ENCODE measurements at regions of chr16 and their contacts with region 1.

Region 1: GRCh38 chr16:1054660-1055556 is 17.6 kb upstream of the SSTR5 start:
- ATAC-seq: peak; percentile 76 to 91 (median 88)
- H3K4me3 ChIP-seq: no peak overlapping the region
- H3K27ac ChIP-seq: no peak overlapping the region
- H3K4me1 ChIP-seq: peaks cover 5 to 25% of the 10 kb centered on the region in 2 donors

Region 2: GRCh38 chr16:53346-54236 is 1001.3 kb before region 1 on chr16 and contains the starts of genes POLR3K and SNRNP25:
- in situ Hi-C with region 1: no loop called
- ATAC-seq: peak; percentile 91 to 98 (median 97)
- H3K4me3 ChIP-seq: peak within 1 kb of the TSS; percentile 54 to 94 (median 80)
- H3K27ac ChIP-seq: peak within 1 kb of the TSS; percentile 8 to 21
- H3K4me1 ChIP-seq: peaks cover 4 to 5% of the 10 kb centered on the region in 2 donors
- total RNA-seq, gene POLR3K: 3.5 to 23.1 (median 10.3) TPM
- total RNA-seq, gene SNRNP25: 14.1 to 50.6 (median 33.1) TPM

Region 3: GRCh38 chr16:720990-721764 is 333.7 kb before region 1 on chr16 and contains the start of gene ANTKMT:
- in situ Hi-C with region 1: loop called in 1 of 9 experiments (anchors 25 kb)
- ATAC-seq: peak; percentile 74 to 89 (median 80)
- H3K4me3 ChIP-seq: peak within 1 kb of the TSS; percentile 59 to 99 (median 77)
- H3K27ac ChIP-seq: peak within 1 kb of the TSS; percentile 94 to 97
- H3K4me1 ChIP-seq: peaks cover 41 to 46% of the 10 kb centered on the region in 2 donors
- total RNA-seq, gene ANTKMT: 21.6 to 30.5 (median 24.5) TPM

Region 4: GRCh38 chr16:807347-808084 is 247.4 kb before region 1 on chr16:
- in situ Hi-C with region 1: loop called in 7 of 9 experiments (anchors 10 to 25 kb)
- ATAC-seq: peak; percentile 91 to 97 (median 95)
- H3K4me3 ChIP-seq: peak overlapping the region; percentile 65 to 95 (median 79)
- H3K27ac ChIP-seq: peak overlapping the region; percentile 83 to 97
- H3K4me1 ChIP-seq: peaks cover 12% of the 10 kb centered on the region in 2 donors

Region 5: DNA sequence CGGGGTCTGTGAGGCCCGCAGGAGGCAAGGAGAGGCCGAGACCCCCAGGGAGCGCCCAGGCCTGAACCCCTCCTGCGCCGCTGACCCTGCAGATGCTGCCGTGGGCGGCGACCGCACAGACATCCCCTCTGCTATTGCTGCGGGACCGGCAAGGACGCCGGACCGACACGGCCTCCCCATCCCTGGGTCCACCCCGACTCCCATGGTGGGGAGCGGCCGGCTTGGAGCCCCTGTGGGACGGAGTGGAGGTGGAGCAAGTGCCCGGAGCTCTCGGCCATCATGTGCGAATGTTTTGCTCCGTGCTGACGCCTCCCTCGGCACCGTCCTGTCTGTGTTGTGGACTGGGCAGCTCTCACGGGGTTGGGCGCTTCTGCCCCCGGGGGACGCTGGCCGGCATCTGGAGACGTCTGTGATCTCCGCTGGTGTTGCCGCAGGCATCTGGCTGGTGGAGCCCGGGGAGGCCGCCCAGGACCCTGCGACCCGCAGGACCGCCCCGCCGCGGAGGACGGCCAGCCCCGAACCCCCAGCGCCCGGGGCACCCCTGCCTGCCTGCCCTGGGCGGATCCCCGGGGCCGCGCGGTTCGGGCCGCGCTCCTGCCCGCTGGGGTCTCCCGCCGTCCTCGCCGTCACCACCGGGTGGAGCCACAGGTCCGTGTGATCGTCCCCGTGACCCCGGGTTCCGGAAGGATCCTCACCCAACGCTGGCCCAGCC is 241.5 kb before region 1 on chr16:
- in situ Hi-C with region 1: loop called in 7 of 9 experiments (anchors 10 to 25 kb)
- ATAC-seq: peak; percentile 81 to 92 (median 86)
- H3K4me3 ChIP-seq: peak overlapping the region in 4 of 5 donors; percentile 2 to 25 (median 22)
- H3K27ac ChIP-seq: no peak overlapping the region
- H3K4me1 ChIP-seq: peaks cover 15 to 16% of the 10 kb centered on the region in 2 donors

Region 6: GRCh38 chr16:2009789-2010510 is 955.0 kb after region 1 on chr16 and contains the start of gene ZNF598:
- in situ Hi-C with region 1: no loop called
- ATAC-seq: peak; percentile 74 to 92 (median 88)
- H3K4me3 ChIP-seq: peak within 1 kb of the TSS; percentile 82 to 100 (median 98)
- H3K27ac ChIP-seq: peak within 1 kb of the TSS; percentile 94 to 98
- H3K4me1 ChIP-seq: peaks cover 32 to 39% of the 10 kb centered on the region in 2 donors
- total RNA-seq, gene ZNF598: 17.6 to 49.1 (median 27.6) TPM